ENCODE measurements at regions of chr5 and their contacts with region 1.

Region 1: GRCh38 chr5:98791001-98791519 is 17.6 kb downstream of the RGMB start:
- DNase-seq: no peak
- H3K4me3 Mint-ChIP-seq: no peak overlapping the region
- H3K27ac Mint-ChIP-seq: no peak overlapping the region
- H3K4me1 Mint-ChIP-seq: no peaks in the 10 kb centered on the region
- H3K27me3 Mint-ChIP-seq: peaks cover 4% of the 10 kb centered on the region

Region 2: DNA sequence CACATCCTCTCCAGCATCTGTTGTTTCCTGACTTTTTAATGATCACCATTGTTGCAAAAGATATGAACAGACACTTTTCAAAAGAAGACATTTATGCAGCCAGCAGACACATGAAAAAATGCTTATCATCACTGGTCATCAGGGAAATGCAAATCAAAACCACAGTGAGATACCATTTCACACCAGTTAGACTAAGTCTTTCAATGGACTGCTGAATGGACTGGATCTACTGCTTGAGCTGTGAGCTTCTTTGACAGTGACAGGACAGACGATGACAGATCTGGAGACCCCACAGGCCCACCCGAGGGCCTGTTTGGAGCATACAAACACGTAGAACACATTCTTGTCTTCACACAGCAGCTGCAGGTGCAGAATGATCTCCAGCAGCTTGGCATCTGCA is 1341.9 kb before region 1 on chr5:
- intact Hi-C with region 1: loop called (anchors 5 kb)
- DNase-seq: no peak
- H3K4me3 Mint-ChIP-seq: no peak overlapping the region
- H3K27ac Mint-ChIP-seq: no peak overlapping the region
- H3K4me1 Mint-ChIP-seq: no peaks in the 10 kb centered on the region
- H3K27me3 Mint-ChIP-seq: no peaks in the 10 kb centered on the region